AG04450 (cell line): ENCODE measurements at regions of chr9 and their contacts with region 1.

Region 1: GRCh38 chr9:78369639-78370219 is 72.8 kb downstream of the PSAT1 start:
- DNase-seq: peak; percentile 42
- H3K4me3 ChIP-seq: no peak overlapping the region
- H3K27ac ChIP-seq: no peak overlapping the region
- H3K27me3 ChIP-seq: peaks cover 3% of the 10 kb centered on the region
- CTCF ChIP-seq: peak; percentile 83

Region 2: GRCh38 chr9:78261403-78262001 is 108.2 kb before region 1 on chr9:
- CTCF ChIA-PET with region 1: interaction called, 34 read pairs
- POLR2A ChIA-PET with region 1: no interaction called
- DNase-seq: peak; percentile 8
- H3K4me3 ChIP-seq: no peak overlapping the region
- H3K27ac ChIP-seq: no peak overlapping the region
- H3K27me3 ChIP-seq: no peaks in the 10 kb centered on the region
- CTCF ChIP-seq: peak; percentile 65

Region 3: GRCh38 chr9:78383130-78383529 is 13.4 kb after region 1 on chr9:
- CTCF ChIA-PET with region 1: interaction called, 45 read pairs
- POLR2A ChIA-PET with region 1: no interaction called
- DNase-seq: no peak
- H3K4me3 ChIP-seq: no peak overlapping the region
- H3K27ac ChIP-seq: no peak overlapping the region
- H3K27me3 ChIP-seq: no peaks in the 10 kb centered on the region
- CTCF ChIP-seq: no peak

Region 4: DNA sequence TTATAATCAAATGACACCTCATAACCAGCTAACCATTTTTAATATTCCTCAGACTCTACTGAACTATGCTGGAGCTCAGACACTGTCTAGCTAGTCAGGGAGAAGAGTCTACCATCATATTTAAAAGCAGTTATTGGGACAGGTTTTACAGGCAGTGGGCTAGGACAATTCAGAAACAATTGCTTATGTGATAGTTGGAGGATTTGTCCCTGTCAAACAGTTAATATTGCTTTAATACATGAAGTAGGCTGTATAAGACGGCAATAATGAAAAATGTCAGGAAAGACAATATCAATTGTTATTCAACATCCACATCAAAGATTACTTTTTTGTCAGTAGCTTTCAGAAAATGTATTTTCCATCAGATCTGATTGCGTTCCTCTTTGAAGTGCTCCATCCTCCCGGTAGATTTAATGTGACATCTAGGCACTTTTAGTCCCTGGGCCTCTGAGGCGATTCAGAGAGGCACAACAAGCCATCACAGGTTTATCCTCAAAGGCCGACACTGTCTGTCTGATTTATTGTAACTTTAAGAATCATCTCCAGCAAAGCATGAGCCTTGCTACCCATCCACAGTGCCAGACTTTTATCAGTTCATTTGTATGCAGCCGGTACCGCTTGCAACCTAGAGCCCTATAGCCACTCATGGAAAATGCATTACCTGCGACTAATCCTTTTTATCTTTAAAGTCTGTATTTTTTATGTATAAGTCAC is 79.4 kb after region 1 on chr9:
- CTCF ChIA-PET with region 1: interaction called, 10 read pairs
- POLR2A ChIA-PET with region 1: no interaction called
- DNase-seq: no peak
- H3K4me3 ChIP-seq: no peak overlapping the region
- H3K27ac ChIP-seq: no peak overlapping the region
- H3K27me3 ChIP-seq: no peaks in the 10 kb centered on the region
- CTCF ChIP-seq: no peak

Region 5: DNA sequence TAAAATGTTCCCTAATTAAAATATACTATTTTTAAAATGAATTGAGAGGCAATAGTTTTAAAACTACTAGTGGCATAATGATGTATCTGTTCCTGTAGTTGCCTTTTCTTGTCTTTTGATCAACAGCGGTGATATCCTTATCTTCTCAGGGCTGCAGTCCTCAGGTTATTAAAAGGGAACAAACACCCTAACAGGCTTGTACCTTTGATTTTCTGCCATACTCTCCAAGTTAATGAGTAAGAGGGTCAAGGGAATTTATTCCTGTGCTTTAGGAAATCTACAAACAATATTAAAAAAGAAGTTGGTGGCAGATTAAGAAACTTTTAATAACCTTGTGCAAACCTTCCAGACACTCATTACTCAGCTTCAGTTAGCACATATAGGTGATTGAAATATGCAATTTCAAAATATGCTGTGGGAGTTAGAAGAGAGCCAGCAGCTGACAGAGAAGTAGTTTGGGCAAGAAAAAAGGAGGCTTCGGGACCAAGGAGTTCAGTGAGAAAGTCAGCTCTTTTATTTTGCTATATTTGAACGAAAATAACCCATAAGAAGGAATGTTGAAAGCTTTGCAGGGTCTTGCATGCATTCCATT is 1121.0 kb after region 1 on chr9:
- CTCF ChIA-PET with region 1: interaction called, 10 read pairs
- POLR2A ChIA-PET with region 1: no interaction called
- DNase-seq: no peak
- H3K4me3 ChIP-seq: no peak overlapping the region
- H3K27ac ChIP-seq: no peak overlapping the region
- H3K27me3 ChIP-seq: no peaks in the 10 kb centered on the region
- CTCF ChIP-seq: no peak